GM10248 (cell line): ENCODE measurements at regions of chr21 and their contacts with region 1.

Region 1: GRCh38 chr21:25607151-25608043 is at the start of gene MRPL39:
- DNase-seq: peak; percentile 95
- CTCF ChIP-seq: peak; percentile 79

Region 2: DNA sequence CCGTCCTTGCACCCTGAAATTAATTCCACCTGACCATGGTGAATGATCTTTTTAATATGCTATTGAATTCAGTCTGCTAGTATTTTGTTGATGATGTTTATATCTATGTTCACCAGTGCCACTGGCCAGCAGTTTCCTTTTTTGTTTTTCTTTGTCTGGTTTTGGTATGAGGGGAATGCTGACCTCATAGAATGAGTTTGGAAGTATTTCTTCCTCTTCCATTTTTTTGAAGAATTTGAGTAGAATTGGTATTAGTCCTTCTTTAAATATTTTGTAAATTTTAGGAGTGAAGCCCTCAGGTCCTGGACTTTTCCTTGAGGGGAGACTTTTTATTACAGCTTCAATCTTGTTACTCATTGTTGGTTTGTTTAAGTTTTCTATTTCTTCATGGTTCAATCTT is 231.7 kb before region 1 on chr21:
- CTCF ChIA-PET with region 1: no interaction called
- POLR2A ChIA-PET with region 1: no interaction called
- DNase-seq: no peak
- CTCF ChIP-seq: no peak

Region 3: DNA sequence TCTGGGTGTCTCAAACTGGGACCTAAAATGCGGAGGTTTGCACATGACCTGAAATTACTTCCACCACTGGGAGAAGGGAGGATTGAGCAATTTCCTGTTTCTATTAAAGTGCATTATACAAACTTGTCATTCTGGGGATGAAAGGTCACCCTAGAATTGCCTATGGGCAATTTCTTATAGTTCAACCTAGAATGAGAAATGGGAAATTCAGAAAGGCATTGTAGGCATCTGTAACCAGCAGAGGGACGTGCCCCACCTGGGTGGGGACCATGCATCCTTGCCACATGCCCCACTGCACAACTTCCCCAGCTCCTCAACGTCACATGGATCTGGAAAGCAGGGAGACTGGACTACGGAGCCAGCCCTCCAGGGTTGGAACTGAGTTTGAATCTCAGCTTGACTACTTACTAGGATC is 47.1 kb before region 1 on chr21:
- CTCF ChIA-PET with region 1: no interaction called
- POLR2A ChIA-PET with region 1: no interaction called
- DNase-seq: no peak
- CTCF ChIP-seq: no peak

Region 4: GRCh38 chr21:25626757-25627156 is 19.4 kb after region 1 on chr21:
- CTCF ChIA-PET with region 1: interaction called, 22 read pairs
- POLR2A ChIA-PET with region 1: no interaction called
- DNase-seq: no peak
- CTCF ChIP-seq: no peak

Region 5: GRCh38 chr21:25647647-25648046 is 40.2 kb after region 1 on chr21:
- CTCF ChIA-PET with region 1: interaction called, 20 read pairs
- POLR2A ChIA-PET with region 1: no interaction called
- DNase-seq: no peak
- CTCF ChIP-seq: no peak

Region 6: GRCh38 chr21:25708467-25709065 is 101.2 kb after region 1 on chr21:
- CTCF ChIA-PET with region 1: interaction called, 26 read pairs
- POLR2A ChIA-PET with region 1: no interaction called
- DNase-seq: peak; percentile 52
- CTCF ChIP-seq: peak; percentile 71

Region 7: GRCh38 chr21:25742900-25743299 is 135.5 kb after region 1 on chr21:
- CTCF ChIA-PET with region 1: interaction called, 13 read pairs
- POLR2A ChIA-PET with region 1: no interaction called
- DNase-seq: no peak
- CTCF ChIP-seq: no peak

Region 8: DNA sequence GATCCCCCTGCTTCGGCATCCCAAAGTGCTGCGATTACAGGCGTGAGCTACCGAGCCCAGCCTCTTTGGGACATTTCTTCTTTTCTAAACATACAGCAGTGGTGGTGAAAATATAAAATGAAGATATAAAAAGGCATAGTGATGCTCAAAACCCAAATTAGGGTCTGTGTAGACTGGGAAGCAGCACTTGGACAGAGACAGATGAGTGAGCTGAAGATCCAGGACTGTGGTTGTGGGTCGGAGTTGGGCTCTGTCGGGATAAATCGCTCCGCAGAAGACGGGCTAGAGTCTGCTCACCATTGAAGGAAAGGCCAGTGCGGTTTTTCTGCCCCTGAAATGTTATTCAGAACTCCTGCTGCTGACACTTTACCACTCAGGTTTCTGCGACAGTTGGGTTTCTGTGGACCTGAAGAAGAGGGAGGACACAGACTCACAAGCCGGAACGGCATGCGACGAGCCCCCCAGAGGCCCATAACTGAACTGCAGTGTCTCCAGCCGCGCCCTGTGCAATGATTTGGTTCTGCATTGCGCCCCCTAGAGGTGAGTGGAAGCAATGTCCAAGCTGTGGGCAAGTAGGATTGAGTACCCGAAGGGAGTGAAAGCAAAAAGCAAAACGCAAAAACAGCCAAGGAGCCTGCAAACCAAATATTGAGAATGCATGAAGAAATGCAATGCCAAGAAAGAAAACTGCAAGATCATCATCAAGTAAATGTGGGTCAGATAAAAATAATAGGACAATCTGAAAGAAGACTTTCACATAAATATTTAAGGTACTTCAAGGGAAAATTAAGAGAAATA is 194.0 kb after region 1 on chr21:
- CTCF ChIA-PET with region 1: interaction called, 27 read pairs
- POLR2A ChIA-PET with region 1: no interaction called
- DNase-seq: peak; percentile 87
- CTCF ChIP-seq: peak; percentile 99